ENCODE measurements at regions of chr2 and their contacts with region 1.

Region 1: GRCh38 chr2:233976690-233977294 is 59.6 kb downstream of the TRPM8 start:
- DNase-seq: peak; percentile 68
- H3K4me3 Mint-ChIP-seq: no peak overlapping the region
- H3K27ac Mint-ChIP-seq: peak overlapping the region; percentile 69
- H3K4me1 Mint-ChIP-seq: peaks cover 83% of the 10 kb centered on the region
- H3K27me3 Mint-ChIP-seq: no peaks in the 10 kb centered on the region
- CTCF ChIP-seq: peak; percentile 49

Region 2: DNA sequence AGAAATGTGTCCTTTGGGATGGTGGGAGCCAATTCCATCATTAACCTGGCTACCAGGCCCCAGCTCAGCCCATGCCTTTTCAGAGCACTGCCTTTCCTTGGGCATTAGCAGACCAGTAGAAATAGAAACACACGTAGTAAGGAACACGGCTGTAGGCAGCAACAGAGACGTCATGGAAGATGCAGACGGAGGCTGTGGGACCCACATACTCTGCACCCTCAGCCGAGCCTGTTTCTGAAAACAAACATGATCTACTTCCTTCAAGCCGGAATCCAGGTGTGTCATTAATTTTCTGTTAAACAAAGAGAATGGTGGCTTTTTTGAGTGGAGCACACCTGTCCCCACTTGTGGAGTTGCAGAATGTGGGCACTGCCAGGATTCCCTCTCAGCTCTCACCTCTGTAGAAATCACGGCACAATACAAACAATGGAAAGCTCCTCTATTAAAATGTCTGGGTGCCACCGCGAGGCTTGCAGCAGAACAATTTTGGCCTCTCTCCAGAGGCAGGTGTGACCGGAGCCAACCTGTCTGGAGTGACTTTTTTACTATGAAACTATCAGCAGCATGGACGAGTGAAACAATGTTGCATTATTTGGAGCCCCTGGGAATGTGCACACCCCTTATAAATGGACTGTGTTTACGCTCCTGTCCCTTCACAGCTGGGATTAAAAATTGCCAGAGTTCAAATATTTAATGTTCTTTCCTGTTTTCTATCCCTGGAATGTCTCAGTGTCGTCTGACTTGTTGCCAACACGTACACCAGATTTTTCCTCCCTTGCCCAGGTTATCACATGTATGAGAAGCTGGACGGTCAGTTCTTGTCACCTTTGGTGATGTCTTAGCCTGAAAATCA is 105.4 kb after region 1 on chr2:
- CTCF ChIA-PET with region 1: interaction called, 9 read pairs
- intact Hi-C with region 1: loop called (anchors 2 kb)
- DNase-seq: peak; percentile 86
- H3K4me3 Mint-ChIP-seq: peak overlapping the region; percentile 45
- H3K27ac Mint-ChIP-seq: peak overlapping the region; percentile 80
- H3K4me1 Mint-ChIP-seq: peaks cover 44% of the 10 kb centered on the region
- H3K27me3 Mint-ChIP-seq: no peaks in the 10 kb centered on the region
- CTCF ChIP-seq: no peak

Region 3: GRCh38 chr2:234135720-234136221 is 159.0 kb after region 1 on chr2:
- CTCF ChIA-PET with region 1: no interaction called
- intact Hi-C with region 1: loop called (anchors 10 kb)
- DNase-seq: peak; percentile 80
- H3K4me3 Mint-ChIP-seq: peak overlapping the region; percentile 11
- H3K27ac Mint-ChIP-seq: peak overlapping the region; percentile 78
- H3K4me1 Mint-ChIP-seq: peaks cover 21% of the 10 kb centered on the region
- H3K27me3 Mint-ChIP-seq: no peaks in the 10 kb centered on the region
- CTCF ChIP-seq: peak; percentile 79

Region 4: GRCh38 chr2:234500394-234501006 is 523.7 kb after region 1 on chr2:
- CTCF ChIA-PET with region 1: interaction called, 5 read pairs
- intact Hi-C with region 1: loop called (anchors 1 kb)
- DNase-seq: peak; percentile 42
- H3K4me3 Mint-ChIP-seq: no peak overlapping the region
- H3K27ac Mint-ChIP-seq: no peak overlapping the region
- H3K4me1 Mint-ChIP-seq: peaks cover 32% of the 10 kb centered on the region
- H3K27me3 Mint-ChIP-seq: no peaks in the 10 kb centered on the region
- CTCF ChIP-seq: peak; percentile 42

Region 5: GRCh38 chr2:235116885-235117492 is 1140.2 kb after region 1 on chr2:
- CTCF ChIA-PET with region 1: interaction called, 5 read pairs
- intact Hi-C with region 1: loop called (anchors 10 kb)
- DNase-seq: no peak
- H3K4me3 Mint-ChIP-seq: no peak overlapping the region
- H3K27ac Mint-ChIP-seq: no peak overlapping the region
- H3K4me1 Mint-ChIP-seq: no peaks in the 10 kb centered on the region
- H3K27me3 Mint-ChIP-seq: peaks cover 46% of the 10 kb centered on the region
- CTCF ChIP-seq: peak; percentile 43

Region 6: GRCh38 chr2:235709124-235709813 is 1732.5 kb after region 1 on chr2:
- CTCF ChIA-PET with region 1: no interaction called
- intact Hi-C with region 1: no loop called
- DNase-seq: peak; percentile 94
- H3K4me3 Mint-ChIP-seq: peak overlapping the region; percentile 62
- H3K27ac Mint-ChIP-seq: peak overlapping the region; percentile 97
- H3K4me1 Mint-ChIP-seq: peaks cover 60% of the 10 kb centered on the region
- H3K27me3 Mint-ChIP-seq: no peaks in the 10 kb centered on the region
- CTCF ChIP-seq: no peak

Measured in Calu3 (cell line).